Sciatic nerve (tissue), 2 donors: ENCODE measurements at regions of chr9 and their contacts with region 1.

Region 1: GRCh38 chr9:105959531-105959930 is 265.2 kb downstream of the TMEM38B start:
- DNase-seq: no peak
- ATAC-seq: no peak

Region 2: DNA sequence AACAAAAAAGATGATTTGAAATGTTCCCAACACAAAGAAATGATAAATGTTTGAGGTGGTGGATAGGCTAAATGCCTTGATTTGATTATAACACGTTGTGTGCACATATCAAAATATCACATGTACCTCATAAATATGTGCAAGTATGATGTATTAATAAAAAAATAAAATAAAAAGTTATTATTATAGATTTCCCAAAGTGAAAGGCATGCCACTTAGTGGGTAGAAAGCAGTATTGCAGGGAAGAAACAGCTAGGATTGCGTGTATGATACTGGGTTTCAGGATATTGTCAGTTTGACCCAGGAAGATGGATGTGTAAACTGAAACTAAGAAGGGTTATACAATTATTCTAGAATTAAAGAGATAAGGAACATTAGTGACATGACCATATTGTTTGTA is 268.8 kb before region 1 on chr9:
- intact Hi-C with region 1: no loop called
- DNase-seq: no peak
- ATAC-seq: no peak

Region 3: GRCh38 chr9:105912860-105913501 is 46.5 kb before region 1 on chr9:
- intact Hi-C with region 1: loop called (anchors 1 kb)
- DNase-seq: no peak
- ATAC-seq: no peak